ENCODE measurements at regions of chr19 and their contacts with region 1.

Region 1: GRCh38 chr19:35013031-35013819 is 13.1 kb downstream of the GRAMD1A start:
- DNase-seq: peak; percentile 72 to 92 (median 89)
- ATAC-seq: peak; percentile 81
- H3K4me3 ChIP-seq: peak overlapping the region; percentile 23 to 46
- H3K4me3 Mint-ChIP-seq: peak overlapping the region; percentile 91
- H3K27ac ChIP-seq: peak overlapping the region; percentile 64 to 78
- H3K27ac Mint-ChIP-seq: peak overlapping the region; percentile 99
- H3K4me1 ChIP-seq: peaks cover 74% of the 10 kb centered on the region
- H3K4me1 Mint-ChIP-seq: peaks cover 69% of the 10 kb centered on the region
- H3K27me3 ChIP-seq: no peaks in the 10 kb centered on the region
- H3K27me3 Mint-ChIP-seq: no peaks in the 10 kb centered on the region
- CTCF ChIP-seq: peak; percentile 99

Region 2: GRCh38 chr19:34838753-34839431 is 174.3 kb before region 1 on chr19:
- CTCF ChIA-PET with region 1: interaction called, 12 read pairs
- POLR2A ChIA-PET with region 1: no interaction called
- intact Hi-C with region 1: loop called (anchors 1 to 5 kb)
- DNase-seq: peak in 4 of 9 experiments; percentile 30 to 60 (median 40)
- ATAC-seq: peak; percentile 38
- H3K4me3 ChIP-seq: no peak overlapping the region
- H3K4me3 Mint-ChIP-seq: peak overlapping the region; percentile 75
- H3K27ac ChIP-seq: no peak overlapping the region
- H3K27ac Mint-ChIP-seq: no peak overlapping the region
- H3K4me1 ChIP-seq: peaks cover 11% of the 10 kb centered on the region
- H3K4me1 Mint-ChIP-seq: peaks cover 19% of the 10 kb centered on the region
- H3K27me3 ChIP-seq: no peaks in the 10 kb centered on the region
- H3K27me3 Mint-ChIP-seq: no peaks in the 10 kb centered on the region
- CTCF ChIP-seq: no peak

Region 3: DNA sequence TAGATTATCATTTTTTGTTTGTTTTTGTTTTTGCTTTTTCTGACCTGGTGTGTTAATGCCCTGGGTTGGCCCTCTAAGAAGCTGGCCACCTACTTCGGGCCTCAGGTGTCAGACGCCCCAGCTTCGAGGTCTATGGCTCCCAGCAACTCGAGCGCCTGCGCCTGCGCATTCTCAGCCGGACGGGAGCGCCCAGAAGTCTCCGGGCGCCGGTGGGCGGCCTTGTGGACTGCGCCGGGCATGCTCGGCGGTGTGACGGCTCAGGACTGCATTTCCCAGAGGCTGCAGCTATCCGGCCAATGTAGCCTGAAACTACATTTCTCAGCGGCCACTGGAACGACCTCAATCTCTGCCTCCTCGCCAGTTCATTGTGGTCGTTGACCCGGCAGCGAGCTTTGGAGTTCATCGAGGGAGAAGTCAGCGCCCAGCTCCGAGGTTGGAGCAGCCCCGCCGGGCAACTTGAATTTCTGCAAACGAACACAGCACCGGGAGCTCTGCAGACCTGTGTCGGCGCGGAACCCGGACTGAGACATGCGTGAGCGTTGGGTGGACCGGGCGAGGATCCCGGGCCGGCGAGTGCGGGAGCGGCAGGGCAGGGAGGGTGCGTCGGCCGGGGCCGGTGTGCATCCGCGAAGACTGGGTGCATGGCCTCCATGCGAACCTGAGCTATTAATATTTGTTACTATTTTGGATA is 86.4 kb before region 1 on chr19 and contains the start of gene ZNF30:
- CTCF ChIA-PET with region 1: interaction called, 13 read pairs
- POLR2A ChIA-PET with region 1: no interaction called
- intact Hi-C with region 1: no loop called
- DNase-seq: peak; percentile 54 to 89 (median 78)
- ATAC-seq: peak; percentile 97
- H3K4me3 ChIP-seq: peak within 1 kb of the TSS; percentile 62 to 78
- H3K4me3 Mint-ChIP-seq: peak within 1 kb of the TSS; percentile 90
- H3K27ac ChIP-seq: peak within 1 kb of the TSS; percentile 39 to 41
- H3K27ac Mint-ChIP-seq: peak within 1 kb of the TSS; percentile 82
- H3K4me1 ChIP-seq: peaks cover 12% of the 10 kb centered on the region
- H3K4me1 Mint-ChIP-seq: peaks cover 26% of the 10 kb centered on the region
- H3K27me3 ChIP-seq: no peaks in the 10 kb centered on the region
- H3K27me3 Mint-ChIP-seq: no peaks in the 10 kb centered on the region
- CTCF ChIP-seq: no peak
- total RNA-seq, gene ZNF30: 1.4 to 1.5 TPM

Region 4: GRCh38 chr19:34974646-34975045 is 38.6 kb before region 1 on chr19:
- CTCF ChIA-PET with region 1: interaction called, 228 read pairs
- POLR2A ChIA-PET with region 1: interaction called, 36 read pairs
- intact Hi-C with region 1: loop called (anchors 1 kb)
- DNase-seq: peak in 1 of 9 experiments; percentile 20
- ATAC-seq: no peak
- H3K4me3 ChIP-seq: no peak overlapping the region
- H3K4me3 Mint-ChIP-seq: no peak overlapping the region
- H3K27ac ChIP-seq: no peak overlapping the region
- H3K27ac Mint-ChIP-seq: peak overlapping the region; percentile 89
- H3K4me1 ChIP-seq: peaks cover 25% of the 10 kb centered on the region
- H3K4me1 Mint-ChIP-seq: peaks cover 29% of the 10 kb centered on the region
- H3K27me3 ChIP-seq: no peaks in the 10 kb centered on the region
- H3K27me3 Mint-ChIP-seq: no peaks in the 10 kb centered on the region
- CTCF ChIP-seq: no peak

Region 5: DNA sequence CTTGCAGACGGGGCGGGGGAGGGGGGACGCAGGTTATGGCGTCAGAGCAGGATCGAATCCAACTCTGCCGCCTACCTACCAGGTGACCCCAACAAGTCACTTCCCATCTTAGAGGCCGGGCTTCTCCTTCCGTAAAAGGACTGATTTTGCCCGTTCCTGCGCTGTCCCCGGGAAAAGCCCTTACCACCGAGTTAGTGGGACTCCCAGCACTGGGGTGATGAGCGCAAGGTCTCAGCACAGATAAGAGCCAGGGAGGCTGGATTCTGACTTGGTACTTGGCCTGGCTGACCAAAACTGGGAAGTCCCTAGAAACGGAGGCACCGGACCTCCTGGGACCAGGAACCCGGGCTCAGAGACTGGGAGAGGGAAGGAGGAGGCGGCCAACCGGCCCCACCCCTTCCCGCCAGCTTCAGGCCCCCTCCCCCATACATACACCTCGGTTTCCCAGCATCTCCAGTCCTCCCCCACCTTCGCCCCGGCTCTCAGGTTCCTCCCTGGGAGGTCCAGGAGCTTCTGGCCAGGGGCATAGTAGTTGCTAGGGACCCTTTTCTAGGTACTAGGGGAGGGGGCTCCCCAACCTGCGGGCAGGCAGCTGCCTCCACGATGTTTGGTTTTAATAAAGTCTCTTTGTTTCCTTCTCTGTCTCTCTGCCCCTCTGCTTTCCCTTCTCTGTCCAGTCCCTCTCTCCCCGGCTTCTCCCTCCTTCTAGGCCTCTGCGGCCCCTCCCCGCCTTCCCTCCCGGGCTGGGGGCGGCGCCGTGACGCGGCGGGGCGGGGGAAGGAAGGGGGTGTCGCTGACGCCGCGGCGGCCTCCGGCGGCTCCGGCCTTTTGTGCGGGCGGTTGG is 13.5 kb before region 1 on chr19 and contains the start of gene GRAMD1A:
- CTCF ChIA-PET with region 1: interaction called, 68 read pairs
- POLR2A ChIA-PET with region 1: interaction called, 60 read pairs
- intact Hi-C with region 1: loop called (anchors 1 kb)
- DNase-seq: peak; percentile 33 to 85 (median 70)
- ATAC-seq: peak; percentile 37
- H3K4me3 ChIP-seq: peak within 1 kb of the TSS; percentile 64 to 71
- H3K4me3 Mint-ChIP-seq: peak within 1 kb of the TSS; percentile 97
- H3K27ac ChIP-seq: peak within 1 kb of the TSS; percentile 86 to 89
- H3K27ac Mint-ChIP-seq: peak within 1 kb of the TSS; percentile 98
- H3K4me1 ChIP-seq: peaks cover 79% of the 10 kb centered on the region
- H3K4me1 Mint-ChIP-seq: peaks cover 64% of the 10 kb centered on the region
- H3K27me3 ChIP-seq: no peaks in the 10 kb centered on the region
- H3K27me3 Mint-ChIP-seq: no peaks in the 10 kb centered on the region
- CTCF ChIP-seq: no peak
- total RNA-seq, gene GRAMD1A: 207 to 221 TPM

Region 6: DNA sequence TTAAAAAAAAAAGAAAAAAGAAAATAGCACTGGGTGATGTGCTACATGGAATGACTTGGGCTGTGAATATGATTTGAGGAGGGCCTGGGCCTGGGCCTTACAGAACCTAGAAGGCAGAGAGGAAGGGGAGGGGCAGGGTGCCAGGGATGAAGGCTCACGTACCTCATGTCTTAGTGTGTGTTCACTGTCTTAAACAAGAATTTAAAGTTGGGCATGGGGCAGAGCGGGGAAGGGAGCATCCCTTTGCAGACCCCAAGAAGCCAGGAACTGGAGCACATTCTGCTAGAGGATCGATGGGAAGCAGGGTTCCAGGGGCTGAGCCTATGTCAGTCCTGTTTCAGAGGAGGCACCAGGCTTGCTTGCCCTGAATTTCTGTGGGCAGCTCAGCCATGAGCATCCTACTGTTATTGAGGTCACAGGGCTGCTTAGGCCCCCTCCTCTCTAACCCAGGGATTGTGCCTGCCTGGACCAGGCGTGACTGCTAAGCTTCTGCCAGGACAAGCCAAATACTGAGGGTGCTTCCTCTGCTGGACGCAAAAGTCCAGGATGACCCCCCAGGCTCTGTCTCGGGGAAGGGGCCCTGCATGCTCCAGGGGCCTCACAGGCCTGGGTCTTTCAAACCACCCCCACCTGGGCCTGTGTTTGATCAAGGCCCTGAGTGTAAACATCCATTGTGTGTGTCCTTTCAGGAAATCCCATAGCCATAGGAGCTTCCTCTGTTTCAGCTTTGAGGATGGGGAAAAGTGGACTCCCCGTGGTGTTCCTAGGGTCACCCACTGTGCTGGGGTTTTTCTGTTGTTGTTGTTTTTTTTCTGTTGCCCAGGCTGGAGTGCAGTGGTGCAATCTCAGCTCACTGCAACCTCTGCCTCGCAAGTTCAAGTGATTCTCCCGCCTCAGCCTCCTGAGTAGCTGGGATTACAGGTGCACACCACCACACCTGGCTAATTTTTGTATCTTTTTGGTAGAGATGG is 240.4 kb after region 1 on chr19:
- CTCF ChIA-PET with region 1: no interaction called
- POLR2A ChIA-PET with region 1: no interaction called
- intact Hi-C with region 1: no loop called
- DNase-seq: peak in 1 of 9 experiments; percentile 44
- ATAC-seq: no peak
- H3K4me3 ChIP-seq: no peak overlapping the region
- H3K4me3 Mint-ChIP-seq: no peak overlapping the region
- H3K27ac ChIP-seq: no peak overlapping the region
- H3K27ac Mint-ChIP-seq: no peak overlapping the region
- H3K4me1 ChIP-seq: peaks cover 23% of the 10 kb centered on the region
- H3K4me1 Mint-ChIP-seq: peaks cover 61% of the 10 kb centered on the region
- H3K27me3 ChIP-seq: no peaks in the 10 kb centered on the region
- H3K27me3 Mint-ChIP-seq: no peaks in the 10 kb centered on the region
- CTCF ChIP-seq: no peak